CD4-positive, alpha-beta memory T cell (primary cell): ENCODE measurements at regions of chr6 and their contacts with region 1.

Region 1: GRCh38 chr6:41039060-41039998 is at the start of gene UNC5CL:
- DNase-seq: peak in 4 of 5 donors; percentile 42 to 50 (median 44)
- H3K4me3 ChIP-seq: no peak within 1 kb of the TSS
- H3K4me3 Mint-ChIP-seq: no peak within 1 kb of the TSS
- H3K27ac ChIP-seq: no peak within 1 kb of the TSS
- H3K27ac Mint-ChIP-seq: peak within 1 kb of the TSS in 4 of 7 donors; percentile 2 to 68 (median 43)
- H3K4me1 ChIP-seq: no peaks in the 10 kb centered on the region
- H3K4me1 Mint-ChIP-seq: peaks cover 0 to 7% (median under 1%) of the 10 kb centered on the region in 4 donors
- H3K27me3 ChIP-seq: no peaks in the 10 kb centered on the region
- H3K27me3 Mint-ChIP-seq: no peaks in the 10 kb centered on the region
- total RNA-seq, gene UNC5CL: 6.2 to 6.4 TPM

Region 2: GRCh38 chr6:40999569-40999968 is 39.8 kb before region 1 on chr6:
- CTCF ChIA-PET with region 1: interaction called, 11 read pairs
- POLR2A ChIA-PET with region 1: no interaction called
- intact Hi-C with region 1: no loop called
- DNase-seq: no peak
- H3K4me3 ChIP-seq: no peak overlapping the region
- H3K4me3 Mint-ChIP-seq: no peak overlapping the region
- H3K27ac ChIP-seq: no peak overlapping the region
- H3K27ac Mint-ChIP-seq: no peak overlapping the region
- H3K4me1 ChIP-seq: no peaks in the 10 kb centered on the region
- H3K4me1 Mint-ChIP-seq: no peaks in the 10 kb centered on the region
- H3K27me3 ChIP-seq: no peaks in the 10 kb centered on the region
- H3K27me3 Mint-ChIP-seq: peaks cover 17 to 28% of the 10 kb centered on the region in 2 donors

Region 3: DNA sequence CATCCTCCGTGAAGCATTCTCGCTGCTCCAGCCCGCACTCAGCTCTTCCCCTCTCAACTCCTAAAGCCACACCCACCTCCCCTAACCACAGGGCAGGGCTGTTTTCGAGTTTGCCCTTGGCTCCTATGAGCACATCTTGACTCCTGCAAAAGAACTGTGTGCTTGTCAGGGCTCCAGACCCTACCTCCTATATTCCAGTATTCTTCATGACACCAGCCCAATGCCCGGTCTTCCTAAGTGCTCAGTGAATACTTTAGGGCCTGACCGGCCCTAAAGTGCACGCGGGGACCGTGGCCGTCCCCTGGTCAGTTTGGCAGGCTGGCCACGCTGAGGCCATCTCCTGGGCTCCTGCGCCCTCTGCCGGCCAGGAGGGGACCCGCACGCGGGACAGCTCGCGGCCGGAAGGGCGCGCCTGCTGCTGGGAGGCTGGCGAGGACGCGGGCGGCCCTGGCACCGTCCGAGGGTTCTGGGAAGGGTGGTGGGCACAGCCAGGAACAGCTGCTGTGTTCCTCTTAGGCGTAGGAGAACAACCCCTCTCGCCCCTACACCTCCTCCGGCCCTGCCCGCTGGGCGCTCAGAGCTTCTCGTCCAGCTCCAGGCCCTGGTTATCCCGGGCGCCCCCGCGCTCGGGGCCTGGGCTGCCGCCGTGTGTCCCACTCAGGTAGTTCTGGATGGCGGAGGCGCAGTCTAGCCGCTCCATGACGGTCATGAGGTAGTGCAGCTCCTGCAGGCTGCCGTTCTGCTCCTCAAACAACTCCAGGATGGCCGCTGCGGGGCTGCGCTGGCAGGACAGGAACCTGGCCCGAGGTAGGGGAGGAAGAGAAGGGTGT is 11.3 kb before region 1 on chr6:
- CTCF ChIA-PET with region 1: interaction called, 46 read pairs
- POLR2A ChIA-PET with region 1: interaction called, 5 read pairs
- intact Hi-C with region 1: no loop called
- DNase-seq: peak; percentile 56 to 79 (median 70)
- H3K4me3 ChIP-seq: peak overlapping the region; percentile 63 to 82
- H3K4me3 Mint-ChIP-seq: peak overlapping the region; percentile 78 to 91 (median 86)
- H3K27ac ChIP-seq: peak overlapping the region; percentile 45
- H3K27ac Mint-ChIP-seq: peak overlapping the region; percentile 68 to 96 (median 89)
- H3K4me1 ChIP-seq: peaks cover 25% of the 10 kb centered on the region
- H3K4me1 Mint-ChIP-seq: peaks cover 19 to 22% (median 20%) of the 10 kb centered on the region in 4 donors
- H3K27me3 ChIP-seq: no peaks in the 10 kb centered on the region
- H3K27me3 Mint-ChIP-seq: no peaks in the 10 kb centered on the region

Region 4: GRCh38 chr6:41049521-41049920 is 10.2 kb after region 1 on chr6:
- CTCF ChIA-PET with region 1: interaction called, 17 read pairs
- POLR2A ChIA-PET with region 1: no interaction called
- intact Hi-C with region 1: no loop called
- DNase-seq: no peak
- H3K4me3 ChIP-seq: no peak overlapping the region
- H3K4me3 Mint-ChIP-seq: no peak overlapping the region
- H3K27ac ChIP-seq: no peak overlapping the region
- H3K27ac Mint-ChIP-seq: peak overlapping the region in 2 of 7 donors; percentile 47 to 77
- H3K4me1 ChIP-seq: peaks cover 16% of the 10 kb centered on the region
- H3K4me1 Mint-ChIP-seq: peaks cover 10 to 17% (median 13%) of the 10 kb centered on the region in 4 donors
- H3K27me3 ChIP-seq: no peaks in the 10 kb centered on the region
- H3K27me3 Mint-ChIP-seq: no peaks in the 10 kb centered on the region

Region 5: GRCh38 chr6:41059556-41059955 is 20.2 kb after region 1 on chr6:
- CTCF ChIA-PET with region 1: interaction called, 14 read pairs
- POLR2A ChIA-PET with region 1: no interaction called
- intact Hi-C with region 1: no loop called
- DNase-seq: no peak
- H3K4me3 ChIP-seq: no peak overlapping the region
- H3K4me3 Mint-ChIP-seq: no peak overlapping the region
- H3K27ac ChIP-seq: no peak overlapping the region
- H3K27ac Mint-ChIP-seq: no peak overlapping the region
- H3K4me1 ChIP-seq: no peaks in the 10 kb centered on the region
- H3K4me1 Mint-ChIP-seq: peaks cover 0 to 4% (median under 1%) of the 10 kb centered on the region in 4 donors
- H3K27me3 ChIP-seq: no peaks in the 10 kb centered on the region
- H3K27me3 Mint-ChIP-seq: no peaks in the 10 kb centered on the region

Region 6: DNA sequence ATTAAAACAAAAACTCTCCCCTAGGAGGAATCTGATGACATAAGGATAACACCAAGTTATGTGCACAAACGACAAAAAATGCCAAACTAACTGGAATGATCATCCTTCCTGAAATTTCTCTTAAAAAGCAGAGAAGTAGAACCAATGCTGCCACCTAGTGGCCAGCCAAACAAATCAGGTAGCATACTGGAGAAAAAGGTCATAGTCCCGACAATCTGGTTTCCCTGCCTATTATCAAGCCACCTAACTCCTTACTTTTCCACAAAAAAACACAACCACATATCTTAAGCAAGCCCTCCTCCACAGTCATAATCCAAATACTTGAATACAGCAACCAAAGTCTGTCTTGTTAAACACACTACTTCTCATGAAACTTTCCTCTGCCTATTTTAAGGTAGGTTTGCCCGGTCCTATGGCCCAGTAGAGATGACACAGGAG is 27.6 kb after region 1 on chr6:
- CTCF ChIA-PET with region 1: interaction called, 17 read pairs
- POLR2A ChIA-PET with region 1: interaction called, 3 read pairs
- intact Hi-C with region 1: no loop called
- DNase-seq: peak; percentile 43 to 62 (median 54)
- H3K4me3 ChIP-seq: no peak overlapping the region
- H3K4me3 Mint-ChIP-seq: peak overlapping the region in 1 of 8 donors; percentile 26
- H3K27ac ChIP-seq: no peak overlapping the region
- H3K27ac Mint-ChIP-seq: peak overlapping the region; percentile 15 to 82 (median 70)
- H3K4me1 ChIP-seq: peaks cover 15% of the 10 kb centered on the region
- H3K4me1 Mint-ChIP-seq: peaks cover 15 to 25% (median 23%) of the 10 kb centered on the region in 4 donors
- H3K27me3 ChIP-seq: no peaks in the 10 kb centered on the region
- H3K27me3 Mint-ChIP-seq: no peaks in the 10 kb centered on the region